CD14-positive monocyte (primary cell): ENCODE measurements at regions of chr14 and their contacts with region 1.

Region 1: GRCh38 chr14:21014761-21015190 is 10.1 kb downstream of the NDRG2 start:
- DNase-seq: peak; percentile 71 to 85 (median 77)
- H3K4me3 ChIP-seq: no peak overlapping the region
- H3K4me3 Mint-ChIP-seq: no peak overlapping the region
- H3K27ac ChIP-seq: no peak overlapping the region
- H3K27ac Mint-ChIP-seq: peak overlapping the region in 4 of 7 donors; percentile 43 to 89 (median 62)
- H3K4me1 ChIP-seq: peaks cover 48 to 52% of the 10 kb centered on the region in 2 donors
- H3K4me1 Mint-ChIP-seq: peaks cover 49% of the 10 kb centered on the region
- H3K27me3 ChIP-seq: peaks cover 0 to 5% of the 10 kb centered on the region in 2 donors
- H3K27me3 Mint-ChIP-seq: peaks cover 14 to 19% (median 18%) of the 10 kb centered on the region in 3 donors
- CTCF ChIP-seq: peak; percentile 92

Region 2: GRCh38 chr14:20998664-20999366 is 16.0 kb before region 1 on chr14 and contains the start of gene SLC39A2:
- intact Hi-C with region 1: no loop called
- DNase-seq: no peak
- H3K4me3 ChIP-seq: no peak within 1 kb of the TSS
- H3K4me3 Mint-ChIP-seq: no peak within 1 kb of the TSS
- H3K27ac ChIP-seq: no peak within 1 kb of the TSS
- H3K27ac Mint-ChIP-seq: peak within 1 kb of the TSS in 1 of 7 donors; percentile 24
- H3K4me1 ChIP-seq: no peaks in the 10 kb centered on the region
- H3K4me1 Mint-ChIP-seq: no peaks in the 10 kb centered on the region
- H3K27me3 ChIP-seq: no peaks in the 10 kb centered on the region
- H3K27me3 Mint-ChIP-seq: peaks cover 0 to 3% (median 0%) of the 10 kb centered on the region in 3 donors
- CTCF ChIP-seq: no peak
- polyA plus RNA-seq, gene SLC39A2: not detected

Region 3: DNA sequence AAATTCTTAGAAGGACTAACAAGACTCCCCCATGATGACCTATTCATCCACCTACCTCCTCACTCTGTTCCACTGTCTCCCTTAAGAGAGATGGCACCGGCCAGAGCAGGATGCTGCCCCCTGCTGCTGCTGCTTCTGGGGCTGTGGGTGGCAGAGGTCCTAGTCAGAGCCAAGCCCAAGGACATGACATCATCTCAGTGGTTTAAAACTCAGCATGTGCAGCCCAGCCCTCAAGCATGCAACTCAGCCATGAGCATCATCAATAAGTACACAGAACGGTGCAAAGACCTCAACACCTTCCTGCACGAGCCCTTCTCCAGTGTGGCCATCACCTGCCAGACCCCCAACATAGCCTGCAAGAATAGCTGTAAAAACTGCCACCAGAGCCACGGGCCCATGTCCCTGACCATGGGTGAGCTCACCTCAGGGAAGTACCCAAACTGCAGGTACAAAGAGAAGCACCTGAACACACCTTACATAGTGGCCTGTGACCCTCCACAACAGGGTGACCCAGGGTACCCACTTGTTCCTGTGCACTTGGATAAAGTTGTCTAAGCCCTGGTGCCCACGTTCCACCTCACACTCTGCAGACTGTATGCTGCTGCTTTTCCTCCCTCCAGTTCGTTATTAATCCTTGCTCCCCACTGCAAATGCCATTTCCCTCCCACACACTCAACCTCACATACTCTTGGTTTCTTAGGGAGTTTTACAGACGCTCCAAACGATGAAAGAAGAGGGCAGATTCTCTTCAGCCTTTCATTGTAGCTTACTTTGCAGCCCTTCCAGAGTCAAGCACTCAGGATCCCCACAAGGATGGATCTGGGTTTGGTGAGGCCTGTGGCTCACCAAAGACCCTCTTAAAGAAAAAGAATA is 43.3 kb after region 1 on chr14 and contains the start of gene RNASE8:
- intact Hi-C with region 1: loop called (anchors 5 to 10 kb)
- DNase-seq: no peak
- H3K4me3 ChIP-seq: no peak within 1 kb of the TSS
- H3K4me3 Mint-ChIP-seq: no peak within 1 kb of the TSS
- H3K27ac ChIP-seq: no peak within 1 kb of the TSS
- H3K27ac Mint-ChIP-seq: peak within 1 kb of the TSS in 1 of 7 donors; percentile 13
- H3K4me1 ChIP-seq: no peaks in the 10 kb centered on the region
- H3K4me1 Mint-ChIP-seq: no peaks in the 10 kb centered on the region
- H3K27me3 ChIP-seq: peaks cover 0 to 6% of the 10 kb centered on the region in 2 donors
- H3K27me3 Mint-ChIP-seq: peaks cover 5 to 10% (median 10%) of the 10 kb centered on the region in 3 donors
- CTCF ChIP-seq: no peak
- polyA plus RNA-seq, gene RNASE8: not detected

Region 4: GRCh38 chr14:21071225-21072030 is 56.7 kb after region 1 on chr14:
- intact Hi-C with region 1: loop called in 1 of 2 experiments (anchors 10 kb)
- DNase-seq: peak; percentile 89 to 91 (median 89)
- H3K4me3 ChIP-seq: peak overlapping the region; percentile 66 to 95 (median 83)
- H3K4me3 Mint-ChIP-seq: peak overlapping the region; percentile 91 to 94
- H3K27ac ChIP-seq: peak overlapping the region; percentile 90 to 94
- H3K27ac Mint-ChIP-seq: peak overlapping the region; percentile 92 to 99 (median 98)
- H3K4me1 ChIP-seq: peaks cover 40 to 45% of the 10 kb centered on the region in 2 donors
- H3K4me1 Mint-ChIP-seq: peaks cover 46% of the 10 kb centered on the region
- H3K27me3 ChIP-seq: peaks cover 0 to 11% of the 10 kb centered on the region in 2 donors
- H3K27me3 Mint-ChIP-seq: peaks cover 11 to 15% (median 14%) of the 10 kb centered on the region in 3 donors
- CTCF ChIP-seq: no peak

Region 5: DNA sequence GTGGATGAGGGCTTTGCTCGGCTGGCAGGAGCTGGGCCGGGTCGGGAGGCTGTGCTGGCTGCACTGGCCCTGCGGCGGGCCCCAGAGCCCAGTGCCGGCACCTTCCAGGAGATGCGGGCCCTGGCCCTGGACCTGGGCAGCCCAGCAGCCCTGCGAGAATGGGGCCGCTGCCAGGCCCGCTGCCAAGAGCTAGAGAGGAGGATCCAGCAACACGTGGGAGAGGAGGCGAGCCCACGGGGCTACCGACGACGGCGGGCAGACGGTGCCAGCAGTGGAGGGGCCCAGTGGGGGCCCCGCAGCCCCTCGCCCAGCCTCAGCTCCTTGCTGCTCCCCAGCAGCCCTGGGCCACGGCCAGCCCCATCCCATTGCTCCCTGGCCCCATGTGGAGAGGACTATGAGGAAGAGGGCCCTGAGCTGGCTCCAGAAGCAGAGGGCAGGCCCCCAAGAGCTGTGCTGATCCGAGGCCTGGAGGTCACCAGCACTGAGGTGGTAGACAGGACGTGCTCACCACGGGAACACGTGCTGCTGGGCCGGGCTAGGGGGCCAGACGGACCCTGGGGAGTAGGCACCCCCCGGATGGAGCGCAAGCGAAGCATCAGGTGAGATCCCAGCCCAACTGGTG is 66.9 kb after region 1 on chr14:
- intact Hi-C with region 1: no loop called
- DNase-seq: no peak
- H3K4me3 ChIP-seq: no peak overlapping the region
- H3K4me3 Mint-ChIP-seq: no peak overlapping the region
- H3K27ac ChIP-seq: peak overlapping the region in 1 of 2 donors; percentile 32
- H3K27ac Mint-ChIP-seq: peak overlapping the region in 4 of 7 donors; percentile 12 to 54 (median 40)
- H3K4me1 ChIP-seq: peaks cover 29 to 33% of the 10 kb centered on the region in 2 donors
- H3K4me1 Mint-ChIP-seq: peaks cover 27% of the 10 kb centered on the region
- H3K27me3 ChIP-seq: no peaks in the 10 kb centered on the region
- H3K27me3 Mint-ChIP-seq: peaks cover 1 to 5% (median 3%) of the 10 kb centered on the region in 3 donors
- CTCF ChIP-seq: no peak

Region 6: DNA sequence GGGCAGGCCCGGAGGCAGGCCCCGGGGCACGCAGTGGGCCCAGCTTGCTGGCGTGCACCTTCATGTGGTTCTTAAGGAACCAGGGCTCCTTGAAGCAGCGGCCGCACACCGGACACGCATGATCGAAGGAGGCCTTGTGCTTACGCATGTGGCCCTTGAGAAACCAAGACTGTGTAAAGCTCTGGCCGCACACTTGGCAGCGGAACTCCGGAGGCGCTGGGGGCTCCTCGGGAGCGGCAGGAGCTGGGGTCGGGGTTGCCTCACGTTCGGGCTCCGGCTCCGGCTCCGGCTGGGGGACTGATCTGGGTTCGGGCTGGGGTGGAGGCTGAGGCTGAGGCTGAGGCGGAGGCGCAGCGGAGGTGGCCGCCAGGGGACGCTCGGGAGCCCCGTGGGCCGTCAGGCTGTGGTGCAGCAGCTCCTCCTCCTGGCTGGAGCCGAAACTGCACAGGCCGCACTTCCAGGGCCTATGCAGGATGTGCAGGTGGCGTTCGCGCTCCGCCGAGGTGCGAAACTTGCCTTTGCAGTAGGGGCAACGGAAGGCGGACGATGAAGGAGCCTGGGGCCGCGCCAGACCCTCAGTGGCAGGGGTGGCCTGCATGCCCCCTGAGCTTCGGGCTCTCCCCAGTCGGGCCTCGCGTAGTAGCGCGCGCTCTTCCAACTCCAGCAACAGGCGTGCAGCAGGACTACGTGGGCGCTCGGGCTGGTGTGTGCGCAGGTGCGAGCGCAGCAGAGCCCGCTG is 77.7 kb after region 1 on chr14:
- intact Hi-C with region 1: loop called (anchors 2 to 5 kb)
- DNase-seq: peak; percentile 75 to 85 (median 81)
- H3K4me3 ChIP-seq: no peak overlapping the region
- H3K4me3 Mint-ChIP-seq: no peak overlapping the region
- H3K27ac ChIP-seq: no peak overlapping the region
- H3K27ac Mint-ChIP-seq: peak overlapping the region in 2 of 7 donors; percentile 15 to 84
- H3K4me1 ChIP-seq: peaks cover 9 to 20% of the 10 kb centered on the region in 2 donors
- H3K4me1 Mint-ChIP-seq: peaks cover 21% of the 10 kb centered on the region
- H3K27me3 ChIP-seq: no peaks in the 10 kb centered on the region
- H3K27me3 Mint-ChIP-seq: peaks cover 3 to 5% (median 3%) of the 10 kb centered on the region in 3 donors
- CTCF ChIP-seq: peak; percentile 100